ENCODE measurements at regions of chr19 and their contacts with region 1.

Region 1: GRCh38 chr19:41439441-41440222 is at the start of gene DMAC2:
- H3K4me3 ChIP-seq: peak within 1 kb of the TSS; percentile 90
- H3K27ac ChIP-seq: peak within 1 kb of the TSS; percentile 70
- H3K4me1 ChIP-seq: peaks cover 4% of the 10 kb centered on the region; the same call in 1 of the 2 replicates
- CTCF ChIP-seq: peak; percentile 63; the same call in 1 of the 2 replicates

Region 2: GRCh38 chr19:41353466-41354342 is 85.9 kb before region 1 on chr19 and contains the start of gene TGFB1:
- CTCF ChIA-PET with region 1: interaction called, 5 read pairs
- POLR2A ChIA-PET with region 1: interaction called, 10 read pairs
- H3K4me3 ChIP-seq: peak within 1 kb of the TSS; percentile 43
- H3K27ac ChIP-seq: peak within 1 kb of the TSS; percentile 77; the same call in 1 of the 2 replicates
- H3K4me1 ChIP-seq: peaks cover 5% of the 10 kb centered on the region; the same call in 1 of the 2 replicates
- CTCF ChIP-seq: peak; percentile 96

Region 3: DNA sequence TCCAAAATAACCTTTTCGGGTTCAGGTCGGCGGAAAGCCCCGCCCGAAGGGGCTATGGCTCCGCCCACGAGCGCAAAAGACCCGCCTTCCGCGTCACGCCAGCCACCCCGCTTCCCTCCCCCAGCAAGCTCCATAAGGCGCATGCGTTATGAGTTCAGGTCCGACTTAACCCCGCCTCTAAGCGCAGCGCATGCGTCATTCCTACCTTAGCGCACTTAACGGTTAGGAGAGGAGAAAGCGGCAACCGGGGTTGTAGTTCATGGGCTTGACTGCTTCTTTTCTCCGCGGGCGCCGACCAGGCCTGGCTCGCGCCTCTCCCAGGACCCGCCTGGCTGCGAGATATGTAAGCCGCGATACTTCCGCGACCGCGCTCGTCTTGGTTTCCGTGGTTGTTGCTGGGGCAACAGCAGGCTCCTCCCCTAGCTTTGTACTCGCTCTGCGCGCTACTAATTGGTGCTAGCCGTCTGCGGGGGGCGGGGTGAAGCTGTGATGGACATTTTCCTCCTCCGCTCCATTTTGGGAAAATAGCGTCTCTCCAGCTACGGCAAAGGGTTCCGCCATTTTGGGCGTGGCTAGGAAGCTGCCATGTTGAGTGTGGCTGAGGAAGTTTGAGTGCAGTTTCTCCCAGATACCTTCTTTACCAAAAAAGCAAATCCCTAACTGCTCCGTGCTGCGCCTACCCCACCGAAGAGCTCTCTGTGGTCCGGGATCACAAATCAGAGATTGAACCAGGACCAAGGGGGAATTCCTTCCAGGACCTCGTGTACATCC is 75.7 kb before region 1 on chr19 and contains the start of gene B9D2:
- CTCF ChIA-PET with region 1: no interaction called
- POLR2A ChIA-PET with region 1: interaction called, 36 read pairs
- H3K4me3 ChIP-seq: peak within 1 kb of the TSS; percentile 72
- H3K27ac ChIP-seq: peak within 1 kb of the TSS; percentile 74
- H3K4me1 ChIP-seq: 0 out of 2 replicates have a peak, but pooled peaks cover 5% of the 10 kb centered on the region
- CTCF ChIP-seq: no peak

Region 4: GRCh38 chr19:41426952-41427646 is 12.5 kb before region 1 on chr19 and contains the start of gene B3GNT8:
- CTCF ChIA-PET with region 1: interaction called, 10 read pairs
- POLR2A ChIA-PET with region 1: interaction called, 25 read pairs
- H3K4me3 ChIP-seq: no peak within 1 kb of the TSS
- H3K27ac ChIP-seq: peak within 1 kb of the TSS; percentile 64
- H3K4me1 ChIP-seq: peaks cover 13% of the 10 kb centered on the region
- CTCF ChIP-seq: no peak

Region 5: GRCh38 chr19:41563854-41564514 is 124.4 kb after region 1 on chr19:
- CTCF ChIA-PET with region 1: interaction called, 433 read pairs
- POLR2A ChIA-PET with region 1: interaction called, 5 read pairs
- H3K4me3 ChIP-seq: no peak overlapping the region
- H3K27ac ChIP-seq: no peak overlapping the region
- H3K4me1 ChIP-seq: peaks cover 3% of the 10 kb centered on the region
- CTCF ChIP-seq: no peak

Region 6: GRCh38 chr19:41570639-41571112 is 131.0 kb after region 1 on chr19:
- CTCF ChIA-PET with region 1: interaction called, 433 read pairs
- POLR2A ChIA-PET with region 1: interaction called, 6 read pairs
- H3K4me3 ChIP-seq: no peak overlapping the region
- H3K27ac ChIP-seq: no peak overlapping the region
- H3K4me1 ChIP-seq: peaks cover 3% of the 10 kb centered on the region
- CTCF ChIP-seq: peak; percentile 99

Region 7: GRCh38 chr19:41859618-41860418 is 420.2 kb after region 1 on chr19 and contains the start of gene RPS19:
- CTCF ChIA-PET with region 1: no interaction called
- POLR2A ChIA-PET with region 1: interaction called, 10 read pairs
- H3K4me3 ChIP-seq: peak within 1 kb of the TSS; percentile 89
- H3K27ac ChIP-seq: peak within 1 kb of the TSS; percentile 100
- H3K4me1 ChIP-seq: peaks cover 27% of the 10 kb centered on the region
- CTCF ChIP-seq: peak; percentile 100